CD8-positive, alpha-beta T cell (primary cell): ENCODE measurements at regions of chr2 and their contacts with region 1.

Region 1: GRCh38 chr2:53786705-53787612 is at the starts of genes ASB3 and ERLEC1:
- DNase-seq: peak; percentile 78 to 95 (median 90)
- ATAC-seq: peak; percentile 88
- H3K4me3 ChIP-seq: peak within 1 kb of the TSS; percentile 94 to 96
- H3K4me3 Mint-ChIP-seq: peak within 1 kb of the TSS; percentile 95
- H3K27ac ChIP-seq: peak within 1 kb of the TSS; percentile 88 to 89
- H3K27ac Mint-ChIP-seq: peak within 1 kb of the TSS; percentile 95
- H3K4me1 ChIP-seq: peaks cover 30% of the 10 kb centered on the region
- H3K4me1 Mint-ChIP-seq: peaks cover 63% of the 10 kb centered on the region
- H3K27me3 ChIP-seq: no peaks in the 10 kb centered on the region
- H3K27me3 Mint-ChIP-seq: no peaks in the 10 kb centered on the region
- CTCF ChIP-seq: no peak
- total RNA-seq, gene ASB3: 25.0 to 26.2 TPM
- total RNA-seq, gene ERLEC1: 24.1 to 27.1 TPM

Region 2: GRCh38 chr2:52976253-52976949 is 810.6 kb before region 1 on chr2:
- CTCF ChIA-PET with region 1: no interaction called
- POLR2A ChIA-PET with region 1: no interaction called
- intact Hi-C with region 1: no loop called
- DNase-seq: no peak
- ATAC-seq: no peak
- H3K4me3 ChIP-seq: no peak overlapping the region
- H3K4me3 Mint-ChIP-seq: no peak overlapping the region
- H3K27ac ChIP-seq: no peak overlapping the region
- H3K27ac Mint-ChIP-seq: no peak overlapping the region
- H3K4me1 ChIP-seq: no peaks in the 10 kb centered on the region
- H3K4me1 Mint-ChIP-seq: no peaks in the 10 kb centered on the region
- H3K27me3 ChIP-seq: no peaks in the 10 kb centered on the region
- H3K27me3 Mint-ChIP-seq: no peaks in the 10 kb centered on the region
- CTCF ChIP-seq: no peak

Region 3: DNA sequence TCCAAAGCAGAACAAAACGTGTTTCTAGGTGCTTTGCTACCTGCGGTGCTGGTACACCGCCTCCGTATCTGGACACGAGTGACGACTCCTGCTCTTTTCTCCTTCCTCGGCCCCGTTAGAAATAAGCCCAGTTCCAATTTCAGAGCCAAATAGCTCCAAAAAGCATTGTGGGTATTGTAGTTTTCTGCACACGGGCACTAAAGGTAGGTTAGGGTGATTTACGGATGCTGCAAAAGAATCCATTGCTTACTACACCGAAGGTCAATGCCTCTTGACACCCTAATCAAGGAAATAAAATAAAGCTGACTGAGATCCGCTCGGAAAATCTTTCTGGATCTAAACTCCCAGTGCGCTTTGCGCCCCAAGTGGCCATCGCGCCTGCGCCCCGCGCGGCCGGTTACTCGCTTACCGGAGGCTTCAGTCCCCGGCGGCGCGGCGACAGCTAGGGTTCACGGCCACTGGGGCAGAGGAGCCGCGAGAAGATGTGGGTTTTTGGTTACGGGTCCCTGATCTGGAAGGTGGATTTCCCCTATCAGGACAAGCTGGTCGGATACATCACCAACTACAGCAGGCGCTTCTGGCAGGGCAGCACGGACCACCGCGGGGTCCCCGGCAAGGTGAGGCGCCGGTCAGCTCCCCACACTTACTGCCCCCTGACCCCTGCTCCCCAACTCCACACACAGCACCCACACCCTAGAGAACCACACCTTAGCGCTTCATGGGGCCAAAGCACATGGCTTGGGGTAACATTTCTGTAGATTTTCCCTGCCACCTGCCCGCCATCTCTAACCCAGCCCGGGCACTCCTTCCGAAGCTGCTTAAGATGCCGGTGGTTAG is 19.3 kb before region 1 on chr2 and contains the start of gene CHAC2:
- CTCF ChIA-PET with region 1: interaction called, 4 read pairs
- POLR2A ChIA-PET with region 1: interaction called, 28 read pairs
- intact Hi-C with region 1: loop called (anchors 1 kb)
- DNase-seq: peak; percentile 50 to 92 (median 84)
- ATAC-seq: peak; percentile 87
- H3K4me3 ChIP-seq: peak within 1 kb of the TSS; percentile 71 to 96
- H3K4me3 Mint-ChIP-seq: peak within 1 kb of the TSS; percentile 92
- H3K27ac ChIP-seq: peak within 1 kb of the TSS; percentile 70 to 86
- H3K27ac Mint-ChIP-seq: peak within 1 kb of the TSS; percentile 93
- H3K4me1 ChIP-seq: peaks cover 9% of the 10 kb centered on the region
- H3K4me1 Mint-ChIP-seq: peaks cover 29% of the 10 kb centered on the region
- H3K27me3 ChIP-seq: no peaks in the 10 kb centered on the region
- H3K27me3 Mint-ChIP-seq: no peaks in the 10 kb centered on the region
- CTCF ChIP-seq: peak; percentile 31
- total RNA-seq, gene CHAC2: 0.87 to 1.0 TPM

Region 4: DNA sequence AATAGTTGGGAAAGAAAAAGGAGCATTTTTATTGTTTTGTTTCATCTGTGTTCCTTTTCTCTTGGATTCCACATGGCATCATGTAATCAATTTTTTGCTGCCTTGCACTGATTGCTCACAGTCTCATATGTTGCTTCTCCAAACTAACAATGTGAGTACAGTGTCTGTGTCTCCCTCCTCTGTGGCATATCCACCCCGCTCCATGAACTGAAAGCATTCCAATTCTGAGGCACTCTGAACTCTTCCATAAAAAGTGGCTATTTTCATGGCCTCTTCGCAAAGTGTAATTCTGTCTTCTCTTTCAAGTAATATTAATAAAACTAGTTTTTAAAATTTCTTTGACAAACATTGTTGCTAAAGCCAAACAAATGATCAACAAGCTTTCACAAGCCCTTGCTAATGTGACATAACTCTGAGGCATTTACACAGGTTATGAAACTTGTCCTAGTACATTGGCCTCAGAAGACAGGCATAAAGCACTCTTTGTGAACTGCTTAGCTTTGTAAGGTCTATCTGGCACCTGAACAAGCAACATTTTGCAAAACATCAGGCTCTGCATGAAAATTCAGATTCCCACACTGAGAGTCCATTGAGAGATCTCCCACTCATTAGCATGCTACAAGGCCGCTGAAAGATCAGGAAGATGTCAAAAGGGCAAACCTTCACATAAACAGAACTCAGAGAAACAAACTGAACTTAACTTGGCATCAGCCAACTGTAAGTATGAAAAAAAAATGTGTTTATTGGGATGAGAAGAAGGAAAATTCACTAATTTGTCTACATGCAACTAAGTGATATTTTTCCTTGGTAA is 39.8 kb after region 1 on chr2:
- CTCF ChIA-PET with region 1: no interaction called
- POLR2A ChIA-PET with region 1: no interaction called
- intact Hi-C with region 1: no loop called
- DNase-seq: no peak
- ATAC-seq: no peak
- H3K4me3 ChIP-seq: no peak overlapping the region
- H3K4me3 Mint-ChIP-seq: no peak overlapping the region
- H3K27ac ChIP-seq: no peak overlapping the region
- H3K27ac Mint-ChIP-seq: peak overlapping the region; percentile 29
- H3K4me1 ChIP-seq: no peaks in the 10 kb centered on the region
- H3K4me1 Mint-ChIP-seq: no peaks in the 10 kb centered on the region
- H3K27me3 ChIP-seq: no peaks in the 10 kb centered on the region
- H3K27me3 Mint-ChIP-seq: no peaks in the 10 kb centered on the region
- CTCF ChIP-seq: no peak

Region 5: DNA sequence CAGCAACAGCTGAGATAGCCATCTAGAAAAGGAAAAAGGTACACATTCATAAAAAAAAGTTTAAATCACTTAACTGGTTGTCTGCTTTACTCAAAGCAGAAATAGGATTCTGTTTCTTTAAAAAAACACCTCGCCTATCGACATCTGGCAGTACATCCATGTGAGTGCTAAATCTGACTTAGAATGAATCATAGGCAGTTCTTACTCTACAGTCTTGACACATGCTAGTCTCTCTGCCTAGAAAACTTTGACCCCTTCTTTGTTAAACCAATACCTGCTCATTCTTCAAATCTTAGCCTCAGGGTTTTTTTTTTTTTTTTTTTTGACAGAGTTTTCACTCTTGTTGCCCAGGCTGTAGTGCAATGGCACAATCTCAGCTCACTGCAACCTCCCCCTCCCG is 109.9 kb after region 1 on chr2:
- CTCF ChIA-PET with region 1: no interaction called
- POLR2A ChIA-PET with region 1: no interaction called
- intact Hi-C with region 1: no loop called
- DNase-seq: no peak
- ATAC-seq: no peak
- H3K4me3 ChIP-seq: no peak overlapping the region
- H3K4me3 Mint-ChIP-seq: no peak overlapping the region
- H3K27ac ChIP-seq: no peak overlapping the region
- H3K27ac Mint-ChIP-seq: no peak overlapping the region
- H3K4me1 ChIP-seq: no peaks in the 10 kb centered on the region
- H3K4me1 Mint-ChIP-seq: peaks cover 1% of the 10 kb centered on the region
- H3K27me3 ChIP-seq: no peaks in the 10 kb centered on the region
- H3K27me3 Mint-ChIP-seq: no peaks in the 10 kb centered on the region
- CTCF ChIP-seq: no peak

Region 6: GRCh38 chr2:54330162-54330925 is 543.4 kb after region 1 on chr2:
- CTCF ChIA-PET with region 1: no interaction called
- POLR2A ChIA-PET with region 1: no interaction called
- intact Hi-C with region 1: loop called in 1 of 2 experiments (anchors 10 kb)
- DNase-seq: peak; percentile 65 to 94 (median 85)
- ATAC-seq: peak; percentile 96
- H3K4me3 ChIP-seq: peak overlapping the region; percentile 58 to 64
- H3K4me3 Mint-ChIP-seq: peak overlapping the region; percentile 88
- H3K27ac ChIP-seq: peak overlapping the region in 1 of 2 experiments; percentile 39
- H3K27ac Mint-ChIP-seq: peak overlapping the region; percentile 52
- H3K4me1 ChIP-seq: peaks cover 11% of the 10 kb centered on the region
- H3K4me1 Mint-ChIP-seq: peaks cover 14% of the 10 kb centered on the region
- H3K27me3 ChIP-seq: no peaks in the 10 kb centered on the region
- H3K27me3 Mint-ChIP-seq: peaks cover 9% of the 10 kb centered on the region
- CTCF ChIP-seq: no peak